ENCODE measurements at regions of chr19 and their contacts with region 1.

Region 1: GRCh38 chr19:13099073-13099999 is 3.3 kb downstream of the LYL1 start:
- DNase-seq: peak; percentile 73 to 88 (median 80)
- H3K4me3 ChIP-seq: peak overlapping the region; percentile 60
- H3K4me3 Mint-ChIP-seq: peak overlapping the region; percentile 66 to 85 (median 81)
- H3K27ac ChIP-seq: peak overlapping the region; percentile 82
- H3K27ac Mint-ChIP-seq: peak overlapping the region; percentile 86 to 100 (median 96)
- H3K4me1 ChIP-seq: peaks cover 81% of the 10 kb centered on the region
- H3K4me1 Mint-ChIP-seq: peaks cover 46 to 78% (median 51%) of the 10 kb centered on the region in 3 donors
- H3K27me3 ChIP-seq: peaks cover 17% of the 10 kb centered on the region
- H3K27me3 Mint-ChIP-seq: peaks cover 23 to 28% of the 10 kb centered on the region in 2 donors

Region 2: DNA sequence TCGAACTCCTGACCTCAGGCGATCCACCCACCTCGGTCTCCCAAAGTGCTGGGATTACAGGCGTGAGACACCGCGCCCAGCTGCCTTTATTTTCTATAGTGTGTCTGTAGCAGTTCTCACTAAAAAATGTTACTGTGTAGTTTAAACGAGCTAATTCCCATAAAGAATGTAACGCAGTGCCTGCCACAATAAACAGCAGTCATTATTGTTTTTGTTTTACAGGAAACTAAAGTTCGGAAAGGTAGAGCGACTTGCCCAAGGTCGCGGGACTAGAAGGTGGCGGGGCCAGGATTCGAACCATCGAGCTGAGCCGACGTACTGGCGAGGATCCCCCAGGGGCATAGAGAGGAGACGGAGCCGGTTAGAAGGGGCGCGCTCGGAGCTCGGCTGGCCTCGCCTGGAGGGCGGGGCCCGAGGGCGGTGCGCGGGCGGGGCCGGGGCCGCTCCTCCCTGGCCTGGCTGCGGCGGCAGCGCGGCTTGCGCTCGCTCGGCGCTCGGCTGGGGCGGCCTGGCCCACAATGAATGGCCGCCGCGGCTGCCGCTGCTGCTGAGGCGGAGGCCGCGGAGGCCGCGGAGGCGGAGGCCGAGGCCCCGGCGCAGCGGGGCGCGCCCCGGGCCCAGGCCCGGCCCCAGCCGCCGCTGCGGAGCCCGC is 18.6 kb after region 1 on chr19 and contains the start of gene NACC1:
- CTCF ChIA-PET with region 1: interaction called, 22 read pairs
- POLR2A ChIA-PET with region 1: interaction called, 10 read pairs
- DNase-seq: peak; percentile 81 to 89 (median 87)
- H3K4me3 ChIP-seq: peak within 1 kb of the TSS; percentile 81
- H3K4me3 Mint-ChIP-seq: peak within 1 kb of the TSS; percentile 90 to 98 (median 92)
- H3K27ac ChIP-seq: peak within 1 kb of the TSS; percentile 68
- H3K27ac Mint-ChIP-seq: peak within 1 kb of the TSS; percentile 78 to 97 (median 95)
- H3K4me1 ChIP-seq: peaks cover 36% of the 10 kb centered on the region
- H3K4me1 Mint-ChIP-seq: peaks cover 55 to 66% (median 64%) of the 10 kb centered on the region in 3 donors
- H3K27me3 ChIP-seq: no peaks in the 10 kb centered on the region
- H3K27me3 Mint-ChIP-seq: peaks cover 0 to 5% of the 10 kb centered on the region in 2 donors
- total RNA-seq, gene NACC1: 89.9 to 111 TPM